Pancreas (tissue), 10 donors: ENCODE measurements at regions of chr13 and their contacts with region 1.

Region 1: DNA sequence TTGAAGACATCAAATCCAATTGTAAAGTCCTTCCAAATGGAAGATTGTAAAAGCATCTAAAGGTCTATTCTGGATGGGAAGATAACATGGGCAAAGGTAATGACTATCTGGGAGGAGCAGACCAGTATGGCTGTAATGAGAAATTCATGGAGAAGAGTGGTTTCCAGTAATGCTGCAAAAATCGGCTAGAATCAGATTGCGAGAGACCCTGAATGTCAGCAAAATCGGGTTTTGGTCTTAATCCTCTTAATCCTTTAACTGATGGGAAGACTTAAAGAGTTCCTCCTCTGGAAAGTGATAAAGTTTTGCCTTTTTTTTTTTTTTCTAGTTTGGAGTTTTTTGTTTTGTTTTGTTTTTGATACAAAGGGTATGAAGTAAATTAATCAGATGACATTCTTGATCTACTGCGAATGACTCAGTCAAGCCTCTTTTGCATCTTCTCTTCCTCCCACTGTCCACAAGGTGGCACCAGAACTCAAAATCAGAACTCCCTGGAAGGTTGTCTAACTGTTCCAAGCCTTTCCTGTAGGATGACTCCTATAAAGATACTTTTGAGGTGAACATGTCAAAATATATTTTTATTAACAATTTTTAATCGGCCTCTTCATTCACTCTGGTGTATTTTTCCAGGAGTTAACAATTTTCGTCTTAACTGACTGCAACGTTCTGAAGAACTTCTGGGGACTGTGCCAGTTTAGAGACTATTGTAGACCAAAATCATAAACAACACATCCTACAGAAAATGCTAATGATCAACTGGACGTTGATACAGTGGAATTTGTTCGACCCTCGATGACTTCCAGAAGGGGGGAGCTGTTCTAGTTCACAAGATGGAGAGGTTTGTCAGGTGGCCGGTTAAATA is 213.3 kb upstream of the MIR17HG start:
- DNase-seq: peak in 3 of 6 donors; percentile 19 to 59 (median 22)
- ATAC-seq: peak; percentile 67 to 97 (median 92)
- H3K4me3 ChIP-seq: no peak overlapping the region
- H3K27ac ChIP-seq: no peak overlapping the region
- H3K4me1 ChIP-seq: no peaks in the 10 kb centered on the region
- H3K27me3 ChIP-seq: no peaks in the 10 kb centered on the region
- CTCF ChIP-seq: peak; percentile 53 to 72 (median 66)

Region 2: GRCh38 chr13:91247768-91248167 is 113.6 kb after region 1 on chr13:
- intact Hi-C with region 1: loop called in 1 of 3 experiments (anchors 10 kb)
- DNase-seq: no peak
- ATAC-seq: no peak
- H3K4me3 ChIP-seq: no peak overlapping the region
- H3K27ac ChIP-seq: no peak overlapping the region
- H3K4me1 ChIP-seq: no peaks in the 10 kb centered on the region
- H3K27me3 ChIP-seq: no peaks in the 10 kb centered on the region
- CTCF ChIP-seq: no peak